K562 (cell line): ENCODE measurements at regions of chr5 and their contacts with region 1.

Region 1: DNA sequence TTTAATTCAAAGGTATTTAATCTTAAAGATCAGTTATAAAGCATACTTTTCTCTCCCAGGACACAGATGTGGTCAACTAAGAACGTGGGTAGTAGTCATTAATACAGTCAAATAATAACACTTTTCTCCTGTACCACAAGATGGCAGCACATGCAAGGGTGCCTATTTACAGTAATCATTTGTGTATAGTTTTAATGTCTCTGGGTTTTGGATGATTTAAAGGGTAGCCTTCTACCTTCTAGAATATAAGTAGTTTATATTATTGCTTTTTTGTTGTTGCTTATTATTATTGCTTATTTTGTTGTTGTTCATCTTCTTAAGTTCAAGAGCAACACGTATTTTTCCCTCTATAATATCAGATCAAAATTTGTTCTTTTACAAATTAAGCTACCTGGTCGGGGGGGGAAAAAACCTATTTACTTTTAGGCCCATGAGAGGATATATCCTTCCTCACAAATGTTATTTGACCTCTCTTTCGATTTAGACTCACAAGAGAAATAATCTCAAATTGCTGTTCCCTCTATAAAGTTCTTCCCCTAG is 59.6 kb upstream of the SLC27A6 start:
- DNase-seq: peak; percentile 47 to 74 (median 52)
- ATAC-seq: peak; percentile 88
- H3K4me3 ChIP-seq: no peak overlapping the region
- H3K27ac ChIP-seq: no peak overlapping the region
- H3K4me1 ChIP-seq: no peaks in the 10 kb centered on the region
- H3K27me3 ChIP-seq: no peaks in the 10 kb centered on the region
- CTCF ChIP-seq: peak; percentile 56 to 83 (median 59); a peak in 5 of 6 replicates
- EP300 ChIP-seq: no peak
- POLR2A ChIP-seq: no peak
- RAD21 ChIP-seq: peak; percentile 96

Region 2: DNA sequence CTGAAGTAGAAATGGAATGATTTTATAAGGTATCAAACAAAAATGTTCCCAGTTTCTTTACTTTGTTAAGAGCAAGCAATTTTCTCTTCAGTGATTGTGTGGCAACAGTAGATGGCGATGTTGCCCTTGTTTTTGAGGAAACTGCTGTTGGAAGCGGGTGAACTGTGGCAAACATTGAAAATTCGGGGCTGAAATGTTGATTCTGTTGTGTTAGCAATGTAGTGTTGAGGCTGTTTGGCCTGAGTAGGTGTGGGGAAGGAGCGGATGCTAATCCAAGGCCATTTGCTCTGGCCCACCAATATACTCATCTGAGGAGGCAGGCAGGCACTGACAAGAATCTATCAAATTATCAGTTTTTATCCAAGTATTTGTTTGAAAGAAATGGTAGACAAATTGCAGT is 692.3 kb before region 1 on chr5:
- CTCF ChIA-PET with region 1: no interaction called
- POLR2A ChIA-PET with region 1: no interaction called
- in situ Hi-C with region 1: no loop called
- intact Hi-C with region 1: loop called (anchors 5 kb)
- DNase-seq: peak; percentile 18 to 65 (median 24)
- ATAC-seq: peak; percentile 83
- H3K4me3 ChIP-seq: no peak overlapping the region
- H3K27ac ChIP-seq: no peak overlapping the region
- H3K4me1 ChIP-seq: no peaks in the 10 kb centered on the region
- H3K27me3 ChIP-seq: peaks cover 0 to 6% of the 10 kb centered on the region in 2 experiments; a peak in 1 of 5 replicates
- CTCF ChIP-seq: peak; percentile 57 to 79 (median 70); a peak in 5 of 6 replicates
- EP300 ChIP-seq: no peak
- POLR2A ChIP-seq: no peak
- RAD21 ChIP-seq: peak; percentile 81 to 85

Region 3: DNA sequence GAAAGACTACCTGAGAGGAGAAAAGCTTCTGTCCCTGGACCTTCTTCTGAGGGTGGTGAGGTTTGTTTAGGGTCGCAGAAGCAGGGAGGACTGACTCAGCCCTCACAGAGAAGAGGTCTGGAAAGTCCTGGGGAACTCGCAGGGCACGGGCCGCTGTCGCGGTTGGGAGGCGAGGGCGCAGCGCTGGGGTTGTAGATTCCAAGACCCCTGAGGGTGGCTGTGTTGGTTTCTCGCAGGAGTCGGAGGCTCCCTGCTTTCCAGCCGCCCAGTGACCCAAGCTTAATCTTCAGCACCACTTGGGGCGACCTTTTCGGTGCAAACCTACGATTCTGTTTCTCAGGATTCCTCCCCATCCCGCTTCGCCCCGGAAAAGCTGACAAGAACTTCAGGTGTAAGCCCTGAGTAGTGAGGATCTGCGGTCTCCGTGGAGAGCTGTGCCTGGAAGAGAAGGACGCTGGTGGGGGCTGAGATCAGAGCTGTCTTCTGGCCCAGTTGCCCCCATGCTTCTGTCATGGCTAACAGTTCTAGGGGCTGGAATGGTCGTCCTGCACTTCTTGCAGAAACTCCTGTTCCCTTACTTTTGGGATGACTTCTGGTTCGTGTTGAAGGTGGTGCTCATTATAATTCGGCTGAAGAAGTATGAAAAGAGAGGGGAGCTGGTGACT is 60.1 kb after region 1 on chr5:
- CTCF ChIA-PET with region 1: no interaction called
- POLR2A ChIA-PET with region 1: no interaction called
- in situ Hi-C with region 1: no loop called
- intact Hi-C with region 1: no loop called
- DNase-seq: peak in 2 of 4 experiments; percentile 4 to 30
- ATAC-seq: peak; percentile 40
- H3K4me3 ChIP-seq: peak overlapping the region; percentile 45
- H3K27ac ChIP-seq: no peak overlapping the region
- H3K4me1 ChIP-seq: peaks cover 0 to 11% of the 10 kb centered on the region in 2 experiments; a peak in 2 of 5 replicates
- H3K27me3 ChIP-seq: peaks cover 0 to 13% of the 10 kb centered on the region in 2 experiments; a peak in 2 of 5 replicates
- CTCF ChIP-seq: no peak
- EP300 ChIP-seq: no peak
- POLR2A ChIP-seq: no peak
- RAD21 ChIP-seq: no peak

Region 4: GRCh38 chr5:129094087-129094923 is 188.7 kb after region 1 on chr5 and contains the start of gene ISOC1:
- CTCF ChIA-PET with region 1: interaction called, 6 read pairs
- POLR2A ChIA-PET with region 1: interaction called, 4 read pairs
- in situ Hi-C with region 1: no loop called
- intact Hi-C with region 1: loop called (anchors 1 kb)
- DNase-seq: peak; percentile 93 to 94 (median 93)
- ATAC-seq: peak; percentile 91
- H3K4me3 ChIP-seq: peak within 1 kb of the TSS; percentile 81
- H3K27ac ChIP-seq: peak within 1 kb of the TSS; percentile 80
- H3K4me1 ChIP-seq: peaks cover 12 to 32% of the 10 kb centered on the region in 2 experiments
- H3K27me3 ChIP-seq: no peaks in the 10 kb centered on the region
- CTCF ChIP-seq: peak; percentile 28 to 48 (median 35); a peak in 3 of 6 replicates
- EP300 ChIP-seq: no peak
- POLR2A ChIP-seq: peak; percentile 79
- RAD21 ChIP-seq: peak; percentile 59 to 66
- polyA plus RNA-seq, gene ISOC1: 14.0 to 20.7 TPM

Region 5: GRCh38 chr5:129135633-129136032 is 230.0 kb after region 1 on chr5:
- CTCF ChIA-PET with region 1: interaction called, 12 read pairs
- POLR2A ChIA-PET with region 1: no interaction called
- in situ Hi-C with region 1: loop called (anchors 25 kb)
- intact Hi-C with region 1: loop called (anchors 1 kb)
- DNase-seq: peak in 2 of 4 experiments; percentile 16 to 53
- ATAC-seq: peak; percentile 94
- H3K4me3 ChIP-seq: no peak overlapping the region
- H3K27ac ChIP-seq: no peak overlapping the region
- H3K4me1 ChIP-seq: no peaks in the 10 kb centered on the region
- H3K27me3 ChIP-seq: no peaks in the 10 kb centered on the region
- CTCF ChIP-seq: peak; percentile 45 to 60 (median 52); a peak in 5 of 6 replicates
- EP300 ChIP-seq: no peak
- POLR2A ChIP-seq: no peak
- RAD21 ChIP-seq: peak; percentile 66 to 86